Gastrocnemius medialis (tissue), 4 donors: ENCODE measurements at regions of chr4 and their contacts with region 1.

Region 1: GRCh38 chr4:185504098-185505047 is 30.9 kb downstream of the PDLIM3 start:
- DNase-seq: peak; percentile 91 to 97
- ATAC-seq: peak; percentile 82 to 87
- H3K4me3 ChIP-seq: peak overlapping the region in 3 of 4 donors; percentile 10 to 22 (median 17)
- H3K27ac ChIP-seq: peak overlapping the region; percentile 83 to 96 (median 92)
- H3K4me1 ChIP-seq: peaks cover 41 to 58% of the 10 kb centered on the region in 2 donors
- H3K27me3 ChIP-seq: no peaks in the 10 kb centered on the region
- CTCF ChIP-seq: no peak
- POLR2A ChIP-seq: peak in 1 of 2 donors; percentile 41

Region 2: GRCh38 chr4:185479507-185479971 is 24.8 kb before region 1 on chr4:
- in situ Hi-C with region 1: no loop called
- intact Hi-C with region 1: loop called (anchors 2 kb)
- DNase-seq: peak in 1 of 2 donors; percentile 31
- ATAC-seq: peak; percentile 96
- H3K4me3 ChIP-seq: peak overlapping the region in 1 of 4 donors; percentile 24
- H3K27ac ChIP-seq: peak overlapping the region; percentile 78 to 90 (median 82)
- H3K4me1 ChIP-seq: peaks cover 29 to 33% of the 10 kb centered on the region in 2 donors
- H3K27me3 ChIP-seq: no peaks in the 10 kb centered on the region
- CTCF ChIP-seq: no peak
- POLR2A ChIP-seq: no peak